CD4-positive, alpha-beta T cell (primary cell): ENCODE measurements at regions of chr19 and their contacts with region 1.

Region 1: DNA sequence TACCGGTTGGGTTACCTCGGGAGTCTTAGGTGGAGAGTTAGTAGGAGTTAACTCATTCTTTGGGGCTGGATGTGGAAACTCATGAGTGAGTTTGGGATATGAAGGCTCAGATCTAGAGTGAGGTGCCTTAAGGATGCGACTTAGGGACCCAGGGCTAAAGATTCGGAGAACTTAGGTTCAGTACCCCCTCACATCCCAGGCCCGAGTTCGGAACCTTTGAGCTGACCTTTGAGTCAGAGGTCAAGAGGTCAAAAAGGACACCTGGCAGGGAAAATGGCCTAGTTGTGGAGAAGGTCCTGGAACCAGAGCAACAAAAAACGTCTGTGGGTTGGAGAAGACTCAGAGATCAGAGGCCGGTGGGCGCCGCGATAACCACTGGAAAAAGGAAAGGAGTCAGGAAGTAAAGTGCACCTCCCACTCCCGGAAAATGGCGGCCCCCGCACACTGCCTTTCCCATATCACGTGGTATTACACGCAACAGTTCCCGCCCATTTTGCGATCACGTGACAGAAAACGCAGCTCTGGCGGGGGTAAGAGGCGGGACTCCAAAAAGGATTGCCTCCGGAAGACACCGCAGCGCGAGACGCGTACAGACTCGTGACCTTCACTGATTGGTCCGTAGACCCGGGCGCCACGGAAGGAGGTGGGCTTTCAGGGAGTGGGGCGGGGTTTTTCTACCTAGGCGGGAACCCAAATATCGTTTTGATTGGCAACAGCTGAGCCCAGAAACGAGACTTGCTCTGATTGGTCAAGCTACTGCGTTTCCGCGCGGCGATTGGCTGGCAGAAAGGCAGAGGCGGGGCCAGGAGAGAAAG is at the start of gene ACTMAP:
- DNase-seq: peak; percentile 98 to 100 (median 99)
- ATAC-seq: peak; percentile 88
- H3K4me3 ChIP-seq: peak within 1 kb of the TSS; percentile 93
- H3K4me3 Mint-ChIP-seq: peak within 1 kb of the TSS; percentile 99
- H3K27ac ChIP-seq: peak within 1 kb of the TSS; percentile 84 to 93
- H3K27ac Mint-ChIP-seq: peak within 1 kb of the TSS; percentile 99
- H3K4me1 ChIP-seq: peaks cover 56% of the 10 kb centered on the region
- H3K4me1 Mint-ChIP-seq: peaks cover 47% of the 10 kb centered on the region
- H3K27me3 ChIP-seq: no peaks in the 10 kb centered on the region
- H3K27me3 Mint-ChIP-seq: no peaks in the 10 kb centered on the region
- CTCF ChIP-seq: no peak
- total RNA-seq, gene ACTMAP: 3.9 to 5.7 TPM

Region 2: DNA sequence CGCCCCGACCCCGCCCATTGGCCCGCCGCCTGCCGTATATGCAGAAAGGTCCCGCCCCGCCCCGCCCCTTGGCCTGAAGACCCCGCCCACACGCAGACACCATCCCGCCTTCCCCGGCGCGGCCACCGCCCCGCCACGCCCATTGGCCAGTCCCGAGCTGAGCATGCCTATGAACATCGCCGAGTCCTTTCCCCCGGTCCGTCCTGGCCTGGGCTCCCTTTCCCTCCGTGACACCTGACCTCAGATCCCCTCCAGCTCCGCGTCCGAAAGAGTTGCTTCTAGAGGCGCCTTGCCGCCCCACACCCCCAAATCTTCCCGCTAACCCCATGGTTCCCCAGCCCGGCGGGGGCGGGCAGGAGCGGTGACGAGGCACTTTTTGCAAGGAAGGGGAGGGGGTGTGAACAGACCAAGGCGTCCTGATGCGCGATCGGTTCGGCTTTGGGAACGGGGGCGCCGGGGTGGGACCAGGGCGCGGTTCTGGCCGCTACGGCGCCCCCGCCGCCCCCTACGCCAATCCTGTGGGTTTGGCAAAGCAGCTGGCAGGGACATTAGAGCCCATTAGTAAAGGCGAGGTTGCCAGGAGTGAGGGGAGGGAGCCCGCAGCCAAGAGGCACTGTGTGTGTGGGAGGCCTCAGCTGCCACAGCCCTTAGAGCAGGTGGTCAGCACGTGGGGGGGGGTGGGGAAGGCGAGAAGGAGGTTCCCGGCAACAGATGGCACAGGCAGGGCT is 59.4 kb before region 1 on chr19:
- CTCF ChIA-PET with region 1: no interaction called
- POLR2A ChIA-PET with region 1: no interaction called
- intact Hi-C with region 1: loop called in 1 of 2 experiments (anchors 2 kb)
- DNase-seq: peak; percentile 72 to 95 (median 84)
- ATAC-seq: peak; percentile 85
- H3K4me3 ChIP-seq: peak overlapping the region; percentile 70
- H3K4me3 Mint-ChIP-seq: peak overlapping the region; percentile 94
- H3K27ac ChIP-seq: no peak overlapping the region
- H3K27ac Mint-ChIP-seq: peak overlapping the region; percentile 54
- H3K4me1 ChIP-seq: peaks cover 20% of the 10 kb centered on the region
- H3K4me1 Mint-ChIP-seq: peaks cover 6% of the 10 kb centered on the region
- H3K27me3 ChIP-seq: no peaks in the 10 kb centered on the region
- H3K27me3 Mint-ChIP-seq: no peaks in the 10 kb centered on the region
- CTCF ChIP-seq: no peak

Region 3: GRCh38 chr19:40777937-40778705 is 27.9 kb after region 1 on chr19 and contains the start of gene RAB4B:
- CTCF ChIA-PET with region 1: interaction called, 6 read pairs
- POLR2A ChIA-PET with region 1: interaction called, 90 read pairs
- intact Hi-C with region 1: loop called (anchors 1 kb)
- DNase-seq: peak; percentile 99 to 100 (median 100)
- ATAC-seq: peak; percentile 84
- H3K4me3 ChIP-seq: peak within 1 kb of the TSS; percentile 69
- H3K4me3 Mint-ChIP-seq: peak within 1 kb of the TSS; percentile 95
- H3K27ac ChIP-seq: peak within 1 kb of the TSS; percentile 93 to 95
- H3K27ac Mint-ChIP-seq: peak within 1 kb of the TSS; percentile 93
- H3K4me1 ChIP-seq: peaks cover 23% of the 10 kb centered on the region
- H3K4me1 Mint-ChIP-seq: peaks cover 36% of the 10 kb centered on the region
- H3K27me3 ChIP-seq: no peaks in the 10 kb centered on the region
- H3K27me3 Mint-ChIP-seq: no peaks in the 10 kb centered on the region
- CTCF ChIP-seq: no peak
- total RNA-seq, gene RAB4B: 26.6 to 26.9 TPM

Region 4: GRCh38 chr19:40806488-40807468 is 56.5 kb after region 1 on chr19:
- CTCF ChIA-PET with region 1: interaction called, 16 read pairs
- POLR2A ChIA-PET with region 1: interaction called, 35 read pairs
- intact Hi-C with region 1: no loop called
- DNase-seq: peak; percentile 66 to 95 (median 75)
- ATAC-seq: peak; percentile 47
- H3K4me3 ChIP-seq: peak overlapping the region; percentile 24
- H3K4me3 Mint-ChIP-seq: peak overlapping the region; percentile 96
- H3K27ac ChIP-seq: peak overlapping the region; percentile 86 to 88
- H3K27ac Mint-ChIP-seq: peak overlapping the region; percentile 90
- H3K4me1 ChIP-seq: peaks cover 100% of the 10 kb centered on the region
- H3K4me1 Mint-ChIP-seq: peaks cover 85% of the 10 kb centered on the region
- H3K27me3 ChIP-seq: no peaks in the 10 kb centered on the region
- H3K27me3 Mint-ChIP-seq: no peaks in the 10 kb centered on the region
- CTCF ChIP-seq: peak; percentile 79

Region 5: DNA sequence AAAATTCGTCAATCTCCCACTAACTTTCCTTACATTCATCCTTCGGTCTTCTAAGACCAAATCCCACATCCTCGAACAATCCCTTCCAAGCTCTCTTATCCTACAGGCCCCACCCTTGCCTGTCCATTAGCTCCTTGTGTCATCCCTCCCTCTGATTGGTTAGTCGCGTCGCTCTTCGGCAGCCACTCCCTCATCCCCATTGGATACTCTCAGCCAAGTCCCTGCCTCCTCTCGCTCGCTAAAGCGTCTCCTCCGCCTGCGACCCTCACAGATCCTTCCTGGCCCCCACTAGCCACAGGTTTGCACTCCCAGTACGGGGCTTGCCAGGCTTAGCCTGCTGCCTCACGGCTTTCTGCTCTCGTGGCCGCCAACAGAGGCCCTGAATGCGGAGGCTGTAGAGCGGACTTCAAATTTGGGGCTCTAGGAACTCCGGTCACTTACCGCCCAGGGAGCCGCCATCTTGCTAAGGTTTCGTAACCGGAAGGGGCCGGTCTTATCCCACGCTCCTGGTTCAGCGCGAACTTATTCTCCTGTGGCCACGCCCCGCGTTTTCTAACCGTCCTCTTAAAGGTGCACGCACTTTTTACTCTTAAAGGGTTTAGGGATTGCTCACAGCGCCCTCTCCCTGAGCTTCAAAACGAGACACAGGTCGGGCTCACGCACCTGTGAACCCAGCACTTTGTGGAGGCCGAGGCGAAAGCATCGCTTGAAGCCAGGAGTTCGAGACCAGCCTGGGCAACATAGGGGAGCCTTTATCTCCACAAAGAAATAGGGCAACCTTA is 689.4 kb after region 1 on chr19 and contains the start of gene DMAC2:
- CTCF ChIA-PET with region 1: no interaction called
- POLR2A ChIA-PET with region 1: no interaction called
- intact Hi-C with region 1: no loop called
- DNase-seq: peak; percentile 86 to 97 (median 93)
- ATAC-seq: peak; percentile 99
- H3K4me3 ChIP-seq: peak within 1 kb of the TSS; percentile 90
- H3K4me3 Mint-ChIP-seq: no peak within 1 kb of the TSS
- H3K27ac ChIP-seq: peak within 1 kb of the TSS; percentile 60 to 77
- H3K27ac Mint-ChIP-seq: no peak within 1 kb of the TSS
- H3K4me1 ChIP-seq: peaks cover 16% of the 10 kb centered on the region
- H3K4me1 Mint-ChIP-seq: no peaks in the 10 kb centered on the region
- H3K27me3 ChIP-seq: no peaks in the 10 kb centered on the region
- H3K27me3 Mint-ChIP-seq: peaks cover 13% of the 10 kb centered on the region
- CTCF ChIP-seq: peak; percentile 65
- total RNA-seq, gene DMAC2: 21.6 to 25.7 TPM